ENCODE measurements at regions of chr5 and their contacts with region 1.

Region 1: GRCh38 chr5:173719731-173720082 is 103.3 kb upstream of the BOD1 start:
- DNase-seq: peak; percentile 77
- ATAC-seq: peak; percentile 97
- H3K4me3 ChIP-seq: peak overlapping the region in 2 of 3 experiments; percentile 21 to 40; a peak in 3 of 6 replicates
- H3K27ac ChIP-seq: peak overlapping the region; percentile 13
- H3K4me1 ChIP-seq: peaks cover 56% of the 10 kb centered on the region
- H3K27me3 ChIP-seq: no peaks in the 10 kb centered on the region
- CTCF ChIP-seq: no peak
- EP300 ChIP-seq: peak in 1 of 2 experiments; percentile 71; a peak in 2 of 4 replicates
- POLR2A ChIP-seq: no peak
- RAD21 ChIP-seq: no peak

Region 2: GRCh38 chr5:173547579-173547978 is 172.1 kb before region 1 on chr5:
- CTCF ChIA-PET with region 1: no interaction called
- POLR2A ChIA-PET with region 1: no interaction called
- in situ Hi-C with region 1: no loop called
- intact Hi-C with region 1: no loop called
- DNase-seq: no peak
- ATAC-seq: no peak
- H3K4me3 ChIP-seq: no peak overlapping the region
- H3K27ac ChIP-seq: no peak overlapping the region
- H3K4me1 ChIP-seq: no peaks in the 10 kb centered on the region
- H3K27me3 ChIP-seq: peaks cover 0 to 28% of the 10 kb centered on the region in 2 experiments; a peak in 1 of 5 replicates
- CTCF ChIP-seq: no peak
- EP300 ChIP-seq: no peak
- POLR2A ChIP-seq: no peak
- RAD21 ChIP-seq: no peak

Region 3: GRCh38 chr5:173736923-173737412 is 17.3 kb after region 1 on chr5:
- CTCF ChIA-PET with region 1: no interaction called
- POLR2A ChIA-PET with region 1: interaction called, 3 read pairs
- in situ Hi-C with region 1: no loop called
- intact Hi-C with region 1: loop called (anchors 1 kb)
- DNase-seq: peak; percentile 32
- ATAC-seq: peak; percentile 67
- H3K4me3 ChIP-seq: peak overlapping the region in 1 of 3 experiments; percentile 43; a peak in 2 of 6 replicates
- H3K27ac ChIP-seq: no peak overlapping the region
- H3K4me1 ChIP-seq: peaks cover 42% of the 10 kb centered on the region
- H3K27me3 ChIP-seq: no peaks in the 10 kb centered on the region
- CTCF ChIP-seq: no peak
- EP300 ChIP-seq: no peak
- POLR2A ChIP-seq: no peak
- RAD21 ChIP-seq: no peak

Region 4: DNA sequence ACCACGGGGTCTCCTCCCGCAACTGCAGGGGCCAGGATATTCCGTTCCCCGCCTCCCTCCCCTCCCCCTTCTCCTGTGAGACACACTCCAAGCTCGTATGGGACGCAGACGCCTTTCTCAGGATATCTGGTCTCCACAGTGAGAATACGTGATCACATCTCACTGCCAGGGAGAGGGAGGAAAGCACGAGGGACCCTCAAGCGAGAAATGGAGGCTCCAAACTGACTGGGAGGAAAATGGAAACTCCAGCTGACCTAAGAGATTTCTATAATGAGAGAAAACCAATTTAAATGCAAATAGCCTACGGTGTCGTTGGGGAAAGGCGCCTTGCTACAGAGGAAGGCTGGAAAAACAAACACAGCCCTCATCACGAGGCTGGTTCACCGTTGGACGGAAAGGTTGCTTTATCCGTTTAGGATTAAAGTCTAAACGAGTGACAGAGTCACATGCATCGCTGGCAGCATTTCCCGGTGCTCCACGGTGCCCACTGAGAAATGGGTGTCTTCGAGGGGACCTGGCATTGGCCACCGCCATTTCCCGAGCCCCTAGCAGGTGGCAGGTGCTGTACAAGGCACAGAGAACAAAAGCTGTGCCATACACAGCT is 51.5 kb after region 1 on chr5:
- CTCF ChIA-PET with region 1: no interaction called
- POLR2A ChIA-PET with region 1: no interaction called
- in situ Hi-C with region 1: no loop called
- intact Hi-C with region 1: no loop called
- DNase-seq: no peak
- ATAC-seq: no peak
- H3K4me3 ChIP-seq: no peak overlapping the region
- H3K27ac ChIP-seq: peak overlapping the region; percentile 12
- H3K4me1 ChIP-seq: peaks cover 57% of the 10 kb centered on the region
- H3K27me3 ChIP-seq: no peaks in the 10 kb centered on the region
- CTCF ChIP-seq: no peak
- EP300 ChIP-seq: no peak
- POLR2A ChIP-seq: no peak
- RAD21 ChIP-seq: no peak

Measured in HepG2 (cell line).